PC-3 (cell line): ENCODE measurements at regions of chr10 and their contacts with region 1.

Region 1: GRCh38 chr10:7090529-7090928 is 320.3 kb downstream of the SFMBT2 start:
- DNase-seq: no peak
- ATAC-seq: no peak
- H3K4me3 ChIP-seq: no peak overlapping the region
- H3K27ac ChIP-seq: no peak overlapping the region
- H3K4me1 ChIP-seq: no peaks in the 10 kb centered on the region
- H3K27me3 ChIP-seq: no peaks in the 10 kb centered on the region
- CTCF ChIP-seq: no peak

Region 2: GRCh38 chr10:7185367-7185690 is 94.8 kb after region 1 on chr10:
- CTCF ChIA-PET with region 1: no interaction called
- POLR2A ChIA-PET with region 1: interaction called, 16 read pairs
- intact Hi-C with region 1: no loop called
- DNase-seq: no peak
- ATAC-seq: no peak
- H3K4me3 ChIP-seq: no peak overlapping the region
- H3K27ac ChIP-seq: no peak overlapping the region
- H3K4me1 ChIP-seq: no peaks in the 10 kb centered on the region
- H3K27me3 ChIP-seq: peaks cover 20% of the 10 kb centered on the region; the same call in 1 of the 2 replicates
- CTCF ChIP-seq: no peak

Region 3: GRCh38 chr10:7199152-7199760 is 108.7 kb after region 1 on chr10:
- CTCF ChIA-PET with region 1: no interaction called
- POLR2A ChIA-PET with region 1: no interaction called
- intact Hi-C with region 1: no loop called
- DNase-seq: no peak
- ATAC-seq: no peak
- H3K4me3 ChIP-seq: no peak overlapping the region
- H3K27ac ChIP-seq: no peak overlapping the region
- H3K4me1 ChIP-seq: no peaks in the 10 kb centered on the region
- H3K27me3 ChIP-seq: peaks cover 11% of the 10 kb centered on the region; the same call in 1 of the 2 replicates
- CTCF ChIP-seq: no peak

Region 4: GRCh38 chr10:7687228-7687907 is 596.8 kb after region 1 on chr10:
- CTCF ChIA-PET with region 1: no interaction called
- POLR2A ChIA-PET with region 1: no interaction called
- intact Hi-C with region 1: no loop called
- DNase-seq: peak; percentile 74
- ATAC-seq: peak; percentile 90
- H3K4me3 ChIP-seq: no peak overlapping the region
- H3K27ac ChIP-seq: no peak overlapping the region
- H3K4me1 ChIP-seq: no peaks in the 10 kb centered on the region
- H3K27me3 ChIP-seq: no peaks in the 10 kb centered on the region
- CTCF ChIP-seq: peak; percentile 79